Mammary epithelial cell (primary cell): ENCODE measurements at regions of chr12 and their contacts with region 1.

Region 1: GRCh38 chr12:49288412-49288853 is 6.5 kb upstream of the PRPH start:
- DNase-seq: peak; percentile 45
- H3K4me3 ChIP-seq: no peak overlapping the region
- H3K27ac ChIP-seq: no peak overlapping the region
- H3K4me1 ChIP-seq: peaks cover 11% of the 10 kb centered on the region
- H3K27me3 ChIP-seq: no peaks in the 10 kb centered on the region
- CTCF ChIP-seq: peak; percentile 78 to 80

Region 2: DNA sequence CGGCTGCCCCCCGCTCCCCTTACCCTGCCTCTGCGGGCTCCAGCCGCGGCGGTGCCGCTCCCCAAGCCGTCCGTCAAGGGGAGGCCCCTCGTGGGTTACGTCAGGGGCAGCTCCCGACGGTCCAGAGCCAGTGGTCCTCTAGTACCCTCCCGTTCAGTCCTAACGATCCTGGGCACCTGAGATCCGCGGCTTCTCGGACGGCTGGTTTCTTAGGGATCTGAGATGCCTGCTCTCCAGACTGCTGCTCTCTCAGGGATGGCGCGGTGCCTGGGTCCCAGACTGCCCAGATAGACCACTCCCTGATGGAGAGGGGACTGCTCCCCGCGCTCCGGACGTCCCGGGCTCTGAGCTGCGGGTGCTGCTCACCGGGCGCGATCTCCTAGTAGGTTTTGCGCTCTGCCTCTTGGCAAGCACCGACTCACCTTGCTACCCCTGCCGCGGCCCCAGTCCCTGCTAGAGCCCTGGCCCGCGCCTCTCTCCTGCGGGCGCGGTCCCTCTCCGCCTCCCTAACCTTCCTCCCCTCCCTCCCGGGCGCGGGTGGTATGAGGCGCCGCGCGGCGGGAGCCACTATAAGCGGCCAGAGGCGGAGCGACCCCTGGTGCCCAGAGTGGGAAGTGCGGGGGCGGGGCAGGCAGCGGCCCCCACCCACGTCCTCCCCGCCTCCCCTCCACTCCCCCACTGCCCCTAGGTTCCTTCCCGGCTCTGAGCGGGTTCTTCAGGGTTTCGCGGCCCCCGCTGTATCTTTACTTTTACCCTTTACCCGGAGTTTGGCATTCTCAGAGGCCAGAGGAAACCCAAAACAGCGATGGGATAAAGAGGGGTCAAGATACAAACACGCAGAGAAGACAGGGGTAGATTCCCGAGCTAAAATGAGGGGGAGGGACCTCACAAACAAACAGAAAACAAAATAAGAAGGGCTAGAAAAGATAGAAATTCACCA is 48.5 kb after region 1 on chr12 and contains the start of gene C1QL4:
- CTCF ChIA-PET with region 1: no interaction called
- dilution Hi-C with region 1: no loop called
- in situ Hi-C with region 1: loop called (anchors 5 kb)
- intact Hi-C with region 1: loop called (anchors 1 kb)
- DNase-seq: peak; percentile 50
- H3K4me3 ChIP-seq: peak within 1 kb of the TSS; percentile 41 to 57 (median 46)
- H3K27ac ChIP-seq: no peak within 1 kb of the TSS
- H3K4me1 ChIP-seq: peaks cover 8% of the 10 kb centered on the region
- H3K27me3 ChIP-seq: no peaks in the 10 kb centered on the region
- CTCF ChIP-seq: peak; percentile 51 to 94
- total RNA-seq, gene C1QL4: 0.24 TPM in 1 of 2 donors, not detected in the other

Region 3: DNA sequence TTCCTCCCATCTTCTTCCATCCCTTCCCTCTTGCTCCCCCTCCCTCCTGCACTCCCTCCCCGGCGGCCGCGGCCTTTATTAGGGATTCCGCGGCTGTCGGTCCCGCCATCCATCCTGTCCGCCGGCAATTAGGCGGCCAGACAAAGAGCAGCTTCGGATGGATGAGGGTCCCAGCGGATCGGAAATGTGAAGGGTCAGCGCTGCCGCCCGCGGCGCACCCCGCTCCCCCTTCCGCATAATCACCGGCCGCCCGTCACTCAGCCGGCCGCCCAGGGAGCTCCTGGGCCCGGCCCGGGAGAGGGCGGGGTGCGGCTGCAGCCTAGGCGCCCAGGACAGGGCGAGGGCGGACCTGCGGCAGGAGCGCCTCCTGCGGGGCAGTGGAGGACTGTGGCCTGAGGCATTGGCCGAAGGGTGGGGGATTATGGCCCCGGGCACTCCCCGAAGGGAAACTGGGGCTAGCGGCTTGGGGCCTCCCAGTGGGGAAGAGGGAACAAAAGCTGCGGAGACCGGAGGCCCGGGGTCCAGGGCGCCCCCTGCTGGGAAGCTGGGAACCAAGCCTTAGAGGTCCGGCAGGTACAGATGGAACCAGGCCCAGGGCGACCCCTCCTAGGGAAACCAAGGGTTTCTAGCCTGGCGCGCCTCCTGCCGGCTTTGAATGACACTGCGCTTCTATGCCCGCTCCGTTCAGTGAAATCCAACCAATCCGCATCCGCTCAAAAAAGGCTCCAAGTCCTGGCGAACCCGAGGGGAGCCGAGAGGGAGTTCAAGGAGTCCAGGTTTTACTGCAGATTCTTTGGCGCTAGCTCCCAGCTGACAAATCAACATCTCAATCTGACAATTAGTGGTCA is 53.9 kb after region 1 on chr12:
- CTCF ChIA-PET with region 1: interaction called, 5 read pairs
- dilution Hi-C with region 1: no loop called
- in situ Hi-C with region 1: loop called (anchors 5 kb)
- intact Hi-C with region 1: loop called (anchors 1 kb)
- DNase-seq: peak; percentile 40
- H3K4me3 ChIP-seq: peak overlapping the region in 1 of 3 experiments; percentile 5
- H3K27ac ChIP-seq: no peak overlapping the region
- H3K4me1 ChIP-seq: peaks cover 30% of the 10 kb centered on the region
- H3K27me3 ChIP-seq: peaks cover 22% of the 10 kb centered on the region
- CTCF ChIP-seq: peak; percentile 65 to 70

Region 4: GRCh38 chr12:49347384-49348237 is 59.2 kb after region 1 on chr12:
- CTCF ChIA-PET with region 1: interaction called, 5 read pairs
- dilution Hi-C with region 1: no loop called
- in situ Hi-C with region 1: no loop called
- intact Hi-C with region 1: loop called (anchors 1 kb)
- DNase-seq: no peak
- H3K4me3 ChIP-seq: peak overlapping the region in 1 of 3 experiments; percentile 11
- H3K27ac ChIP-seq: no peak overlapping the region
- H3K4me1 ChIP-seq: peaks cover 30% of the 10 kb centered on the region
- H3K27me3 ChIP-seq: peaks cover 24% of the 10 kb centered on the region
- CTCF ChIP-seq: peak; percentile 80 to 85

Region 5: GRCh38 chr12:49358483-49359141 is 70.2 kb after region 1 on chr12:
- CTCF ChIA-PET with region 1: interaction called, 14 read pairs
- dilution Hi-C with region 1: no loop called
- in situ Hi-C with region 1: no loop called
- intact Hi-C with region 1: loop called (anchors 1 kb)
- DNase-seq: peak; percentile 71
- H3K4me3 ChIP-seq: no peak overlapping the region
- H3K27ac ChIP-seq: peak overlapping the region; percentile 20
- H3K4me1 ChIP-seq: peaks cover 23% of the 10 kb centered on the region
- H3K27me3 ChIP-seq: no peaks in the 10 kb centered on the region
- CTCF ChIP-seq: peak; percentile 66 to 84

Region 6: GRCh38 chr12:49553512-49554088 is 265.2 kb after region 1 on chr12:
- CTCF ChIA-PET with region 1: no interaction called
- dilution Hi-C with region 1: no loop called
- in situ Hi-C with region 1: no loop called
- intact Hi-C with region 1: loop called (anchors 5 kb)
- DNase-seq: peak; percentile 48
- H3K4me3 ChIP-seq: no peak overlapping the region
- H3K27ac ChIP-seq: no peak overlapping the region
- H3K4me1 ChIP-seq: peaks cover 13% of the 10 kb centered on the region
- H3K27me3 ChIP-seq: no peaks in the 10 kb centered on the region
- CTCF ChIP-seq: peak; percentile 78 to 85

Region 7: GRCh38 chr12:49580572-49581535 is 292.4 kb after region 1 on chr12:
- CTCF ChIA-PET with region 1: no interaction called
- dilution Hi-C with region 1: no loop called
- in situ Hi-C with region 1: no loop called
- intact Hi-C with region 1: loop called (anchors 5 kb)
- DNase-seq: peak; percentile 71
- H3K4me3 ChIP-seq: no peak overlapping the region
- H3K27ac ChIP-seq: no peak overlapping the region
- H3K4me1 ChIP-seq: no peaks in the 10 kb centered on the region
- H3K27me3 ChIP-seq: no peaks in the 10 kb centered on the region
- CTCF ChIP-seq: peak; percentile 86 to 96